ENCODE measurements at regions of chr12 and their contacts with region 1.

Region 1: GRCh38 chr12:9925708-9926393 is 6.3 kb downstream of the CLEC2A start:
- DNase-seq: no peak

Region 2: DNA sequence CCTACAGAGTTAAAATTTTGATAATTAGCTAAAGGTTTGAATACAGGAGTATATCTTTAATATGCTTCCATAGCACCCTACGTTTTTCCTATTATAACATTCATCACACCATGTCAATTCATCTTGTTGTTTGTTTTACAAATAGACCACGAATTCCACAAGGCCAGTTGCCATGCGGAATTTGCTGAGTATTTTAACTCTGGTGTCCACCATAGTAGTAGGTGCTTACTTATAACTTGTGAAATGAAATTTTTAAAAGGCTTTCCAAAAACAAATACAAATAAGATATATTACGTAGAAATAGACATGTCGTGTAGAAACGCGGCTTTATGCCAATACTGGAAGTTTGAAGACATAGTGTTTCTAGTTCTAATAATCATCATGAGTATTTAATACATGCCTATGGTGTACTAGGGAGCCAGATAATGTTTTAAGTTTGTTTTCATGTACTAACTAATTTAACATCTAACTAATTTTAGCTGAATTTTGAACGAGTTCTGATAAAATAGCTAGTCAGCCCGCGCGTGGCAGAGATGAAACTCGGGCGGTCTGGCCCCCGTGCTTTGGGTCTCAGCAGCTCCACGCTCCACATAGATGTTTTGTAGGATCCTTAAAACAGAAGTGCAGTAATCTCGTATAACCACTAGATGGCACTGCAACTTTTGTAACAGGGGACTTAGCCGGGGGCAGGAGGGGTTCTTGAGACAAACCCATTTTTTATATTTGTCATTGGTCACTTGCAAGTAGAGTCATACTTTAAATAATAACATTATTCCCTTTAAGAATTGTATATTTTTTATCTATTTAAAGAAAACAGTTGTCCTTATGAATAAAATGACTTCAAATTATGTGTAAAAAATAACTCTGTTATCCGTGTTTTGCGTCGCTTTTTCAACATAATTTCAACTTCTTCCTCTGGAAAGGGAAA is 175.3 kb before region 1 on chr12:
- intact Hi-C with region 1: loop called (anchors 5 kb)
- DNase-seq: no peak

Region 3: GRCh38 chr12:9813821-9814809 is 111.7 kb before region 1 on chr12:
- intact Hi-C with region 1: loop called (anchors 5 kb)
- DNase-seq: peak; percentile 95

Measured in cardiac septum (tissue), 1 donor.